ENCODE measurements at regions of chr4 and their contacts with region 1.

Region 1: DNA sequence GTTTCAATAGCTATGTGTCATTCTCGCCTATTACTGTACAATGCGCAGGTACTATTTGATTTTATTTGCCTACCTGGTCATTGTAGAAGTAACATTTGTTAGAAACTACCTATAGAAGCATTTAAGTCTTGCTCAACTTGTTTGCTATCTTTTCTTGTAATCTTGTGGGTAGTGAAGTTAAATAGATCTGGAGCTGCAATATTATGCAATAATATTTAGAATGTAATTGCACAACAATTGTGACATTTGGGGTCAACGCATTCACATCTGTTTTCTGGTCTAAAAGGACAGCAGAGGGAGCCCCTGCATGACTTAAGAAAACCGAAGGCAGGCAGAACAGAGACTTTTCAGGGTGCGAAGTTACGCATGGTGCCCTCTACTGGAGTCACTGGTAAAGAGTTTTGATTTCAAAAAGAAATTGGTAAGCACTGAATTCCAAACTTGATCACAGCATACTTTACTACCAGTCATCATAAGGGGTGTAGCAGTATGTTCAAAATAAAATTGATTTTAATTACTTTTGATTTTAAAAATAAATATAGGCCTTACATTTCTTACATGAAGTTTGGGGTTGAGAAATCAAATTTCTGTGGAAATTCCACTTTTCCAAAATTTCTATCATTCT is 503.2 kb upstream of the FAM241A start:
- DNase-seq: peak; percentile 53
- H3K4me3 Mint-ChIP-seq: no peak overlapping the region
- H3K27ac Mint-ChIP-seq: no peak overlapping the region
- H3K4me1 Mint-ChIP-seq: no peaks in the 10 kb centered on the region
- H3K27me3 Mint-ChIP-seq: no peaks in the 10 kb centered on the region

Region 2: DNA sequence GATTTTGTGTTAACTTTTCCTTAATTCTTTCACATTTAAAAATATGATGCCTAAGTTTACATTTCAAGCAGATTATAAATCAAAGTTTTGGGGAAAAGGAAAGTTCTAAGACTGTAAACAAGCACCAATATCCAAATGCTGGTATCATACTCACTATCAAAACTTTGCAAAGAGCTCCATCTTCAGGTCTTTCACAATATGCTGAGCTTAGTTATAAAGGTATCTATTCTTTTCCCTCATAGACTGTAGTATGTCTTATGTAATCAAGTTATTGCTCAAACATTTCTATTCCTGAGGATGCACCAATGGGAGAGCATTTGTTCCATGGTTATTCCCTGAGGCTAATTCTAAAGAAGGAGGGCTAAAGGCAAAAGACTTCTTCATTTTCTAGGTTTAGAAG is 295.3 kb after region 1 on chr4:
- CTCF ChIA-PET with region 1: no interaction called
- intact Hi-C with region 1: loop called (anchors 5 kb)
- DNase-seq: no peak
- H3K4me3 Mint-ChIP-seq: no peak overlapping the region
- H3K27ac Mint-ChIP-seq: no peak overlapping the region
- H3K4me1 Mint-ChIP-seq: no peaks in the 10 kb centered on the region
- H3K27me3 Mint-ChIP-seq: no peaks in the 10 kb centered on the region

Region 3: DNA sequence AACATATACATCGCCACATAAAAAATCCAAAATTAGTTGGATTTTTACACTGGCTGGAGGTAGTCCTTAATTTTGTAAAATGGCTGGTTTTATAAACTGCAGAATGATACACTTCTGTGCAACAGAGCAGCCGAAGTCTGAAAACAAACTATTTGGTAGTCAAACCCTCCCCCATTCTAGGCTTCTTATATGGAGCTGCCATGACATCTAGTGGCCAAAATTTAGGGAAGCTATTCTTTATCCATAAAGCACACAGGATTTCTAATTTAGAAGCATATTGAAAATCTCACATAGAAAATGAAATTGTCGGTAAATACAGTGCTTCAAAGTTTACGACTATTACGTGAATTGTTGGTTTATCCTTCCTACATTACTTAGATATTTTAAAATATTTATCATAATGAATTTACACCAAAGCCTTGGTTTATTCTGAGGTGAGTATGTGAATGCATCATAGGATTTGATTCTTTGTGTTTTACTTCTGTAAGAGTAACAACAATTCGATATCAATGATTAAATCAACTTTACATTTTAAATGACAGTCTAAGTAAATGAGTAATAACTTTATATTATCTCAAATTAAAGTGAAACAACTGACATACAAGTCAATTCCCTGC is 389.8 kb after region 1 on chr4:
- CTCF ChIA-PET with region 1: no interaction called
- intact Hi-C with region 1: loop called (anchors 1 kb)
- DNase-seq: peak; percentile 13
- H3K4me3 Mint-ChIP-seq: no peak overlapping the region
- H3K27ac Mint-ChIP-seq: no peak overlapping the region
- H3K4me1 Mint-ChIP-seq: no peaks in the 10 kb centered on the region
- H3K27me3 Mint-ChIP-seq: peaks cover 16% of the 10 kb centered on the region

Measured in activated naive CD4-positive, alpha-beta T cell treated with anti-CD3 and anti-CD28 coated beads for 36 hours (primary cell).